ENCODE measurements at regions of chr5 and their contacts with region 1.

Region 1: DNA sequence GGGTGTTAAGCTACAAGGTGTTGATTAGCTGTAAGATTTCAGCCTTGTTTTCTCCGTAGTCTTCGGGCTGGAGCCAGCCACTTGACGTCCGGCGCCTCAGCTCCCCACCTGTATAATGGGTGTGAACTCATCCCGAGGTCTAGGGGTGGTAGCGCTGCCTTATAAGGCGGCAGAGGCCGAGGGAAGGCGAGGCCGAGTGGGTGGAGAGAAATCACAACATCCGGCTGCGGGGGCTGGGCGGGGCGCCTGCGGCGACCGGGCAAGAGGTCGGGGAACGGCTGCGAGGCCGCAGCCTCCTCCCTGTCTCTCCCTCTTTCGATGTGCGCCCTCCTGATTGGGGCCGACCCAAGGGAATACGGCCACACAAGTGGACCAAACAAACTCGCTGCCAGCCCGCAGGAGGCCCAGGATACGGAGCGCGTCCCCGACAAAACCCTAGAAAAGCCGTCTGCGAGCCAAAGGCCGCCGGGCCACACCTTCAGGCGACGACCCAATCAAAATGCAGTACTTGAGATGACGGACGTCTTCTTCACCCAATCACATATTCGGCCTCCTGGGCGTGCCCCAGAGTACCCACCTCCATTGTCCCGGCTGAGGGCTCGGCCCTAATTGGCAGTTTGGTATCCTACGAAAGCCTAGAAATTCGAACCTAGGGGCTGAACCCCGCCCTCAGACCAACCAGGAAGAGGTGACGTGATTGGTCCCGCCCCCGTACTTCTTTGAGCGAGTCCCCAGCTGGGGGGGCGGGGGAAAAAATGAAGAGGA is 493 bp upstream of the GRK6 start:
- DNase-seq: peak; percentile 100
- H3K4me3 ChIP-seq: peak overlapping the region; percentile 68
- H3K27ac ChIP-seq: peak overlapping the region; percentile 62
- H3K4me1 ChIP-seq: peaks cover 49% of the 10 kb centered on the region
- CTCF ChIP-seq: no peak

Region 2: GRCh38 chr5:177006265-177006972 is 419.6 kb before region 1 on chr5 and contains the start of gene UIMC1:
- CTCF ChIA-PET with region 1: no interaction called
- POLR2A ChIA-PET with region 1: no interaction called
- intact Hi-C with region 1: loop called (anchors 5 kb)
- DNase-seq: peak; percentile 96
- H3K4me3 ChIP-seq: peak within 1 kb of the TSS; percentile 95
- H3K27ac ChIP-seq: peak within 1 kb of the TSS; percentile 72
- H3K4me1 ChIP-seq: peaks cover 39% of the 10 kb centered on the region
- CTCF ChIP-seq: no peak
- total RNA-seq, gene UIMC1: 42.7 and 58.4 TPM in 2 replicates

Region 3: DNA sequence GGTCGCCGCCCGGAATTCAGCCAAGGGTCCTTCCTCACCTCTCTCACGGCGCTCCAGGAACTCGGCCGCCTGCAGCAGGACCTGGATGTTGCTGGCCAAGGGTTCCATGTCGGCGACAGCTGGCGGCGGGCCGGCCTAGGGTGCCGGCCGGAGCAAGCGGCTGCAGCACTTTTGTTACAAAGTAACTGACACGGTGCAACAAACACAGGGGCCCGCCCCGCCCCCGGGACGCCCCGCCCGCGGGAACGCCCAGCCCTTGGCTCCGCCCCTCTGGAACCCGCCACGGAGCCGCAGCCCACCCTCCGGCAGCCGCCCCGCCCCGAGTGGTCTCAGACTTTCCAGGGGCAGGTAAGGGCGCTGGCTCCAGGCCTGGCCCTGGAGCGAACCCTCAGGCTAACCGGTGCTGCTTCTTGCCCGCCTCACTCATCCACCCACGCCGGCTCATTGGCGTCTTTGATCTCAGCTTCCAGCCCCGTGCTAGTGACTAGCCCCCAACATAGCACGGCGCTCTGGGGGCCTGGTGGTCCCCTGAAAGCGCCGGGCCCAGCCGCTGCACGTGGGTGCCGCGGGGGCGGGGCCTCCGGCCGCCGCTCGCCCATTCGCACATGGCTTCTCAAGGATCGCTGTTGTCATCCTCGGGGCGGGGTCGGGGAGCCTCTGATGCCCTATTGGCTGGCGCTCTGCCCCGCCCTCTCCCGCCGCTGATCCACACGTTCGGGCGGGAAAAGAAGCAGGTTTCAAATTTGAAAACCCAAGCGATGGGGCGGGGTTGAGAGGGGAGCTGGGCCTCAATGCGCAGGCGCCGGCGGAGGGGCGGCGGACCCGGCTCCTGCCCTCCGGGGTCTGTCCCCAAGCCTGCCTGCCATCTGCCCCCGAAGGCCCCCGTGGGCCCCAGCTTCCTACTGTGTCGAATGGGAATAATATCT is 114.0 kb before region 1 on chr5 and contains the start of gene MXD3:
- CTCF ChIA-PET with region 1: interaction called, 5 read pairs
- POLR2A ChIA-PET with region 1: no interaction called
- intact Hi-C with region 1: loop called (anchors 1 kb)
- DNase-seq: peak; percentile 99
- H3K4me3 ChIP-seq: peak within 1 kb of the TSS; percentile 94
- H3K27ac ChIP-seq: peak within 1 kb of the TSS; percentile 92
- H3K4me1 ChIP-seq: peaks cover 51% of the 10 kb centered on the region
- CTCF ChIP-seq: no peak
- total RNA-seq, gene MXD3: 109 and 130 TPM in 2 replicates

Region 4: DNA sequence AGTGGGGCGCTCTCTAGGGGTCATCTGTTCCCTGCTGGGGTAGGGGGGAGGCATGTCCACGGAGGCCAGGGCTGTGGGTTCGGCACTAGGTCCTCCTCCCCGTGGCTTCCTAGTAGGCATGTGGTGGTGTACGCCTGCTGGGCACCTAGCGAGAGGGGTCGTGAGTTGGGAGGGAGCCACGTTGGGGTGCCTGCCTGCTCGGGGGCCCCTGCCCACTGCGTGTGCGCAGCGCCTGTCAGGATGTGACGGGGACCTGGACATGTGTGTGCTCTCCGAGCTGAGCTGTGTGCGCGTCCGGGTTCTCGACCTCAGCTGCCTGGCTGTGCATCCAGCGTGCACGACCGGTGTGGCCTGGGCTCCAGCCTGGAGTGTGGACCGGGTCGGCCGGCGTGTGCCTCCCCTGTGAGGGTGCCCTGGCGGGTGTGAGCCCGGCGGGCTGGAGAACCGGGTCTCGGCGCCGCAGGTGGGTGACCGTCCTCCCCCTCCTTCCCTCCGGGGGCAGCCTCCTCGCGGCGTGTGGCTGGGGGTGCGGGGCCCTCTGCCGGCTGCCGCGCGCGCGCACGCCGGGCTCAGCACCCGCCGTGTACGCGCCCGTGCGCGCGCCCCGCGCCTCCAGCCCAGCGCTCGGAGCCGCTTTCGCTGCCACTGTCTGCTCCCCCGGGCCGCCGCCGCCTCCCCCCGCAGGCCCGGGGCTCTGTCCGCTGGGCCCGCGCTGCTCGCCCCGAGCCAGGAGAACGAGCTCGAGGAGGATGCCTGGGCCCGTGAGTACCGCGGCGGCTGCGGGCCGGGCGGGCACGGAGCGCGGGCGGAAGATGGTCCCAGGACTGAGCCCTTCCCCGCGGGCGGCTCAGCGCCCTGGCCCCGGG is 20.4 kb after region 1 on chr5 and contains the start of gene PRR7:
- CTCF ChIA-PET with region 1: interaction called, 6 read pairs
- POLR2A ChIA-PET with region 1: interaction called, 10 read pairs
- intact Hi-C with region 1: loop called (anchors 2 kb)
- DNase-seq: peak; percentile 87
- H3K4me3 ChIP-seq: peak within 1 kb of the TSS; percentile 72
- H3K27ac ChIP-seq: no peak within 1 kb of the TSS
- H3K4me1 ChIP-seq: peaks cover 47% of the 10 kb centered on the region
- CTCF ChIP-seq: no peak; the same call in 1 of the 2 replicates
- total RNA-seq, gene PRR7: 7.0 and 13.6 TPM in 2 replicates

Region 5: GRCh38 chr5:177509381-177509951 is 83.5 kb after region 1 on chr5 and contains the start of gene DOK3:
- CTCF ChIA-PET with region 1: no interaction called
- POLR2A ChIA-PET with region 1: interaction called, 7 read pairs
- intact Hi-C with region 1: loop called (anchors 1 kb)
- DNase-seq: peak; percentile 82
- H3K4me3 ChIP-seq: peak within 1 kb of the TSS; percentile 77
- H3K27ac ChIP-seq: peak within 1 kb of the TSS; percentile 95
- H3K4me1 ChIP-seq: peaks cover 61% of the 10 kb centered on the region
- CTCF ChIP-seq: no peak
- total RNA-seq, gene DOK3: 186 and 197 TPM in 2 replicates

Measured in OCI-LY7 (cell line).